ENCODE measurements at regions of chr9 and their contacts with region 1.

Region 1: GRCh38 chr9:34328987-34329832 is at the starts of genes KIF24 and NUDT2:
- DNase-seq: peak; percentile 78 to 99 (median 95)
- ATAC-seq: peak; percentile 92 to 95 (median 94)
- H3K4me3 ChIP-seq: peak within 1 kb of the TSS; percentile 84 to 92
- H3K4me3 Mint-ChIP-seq: peak within 1 kb of the TSS; percentile 93 to 98 (median 93)
- H3K27ac ChIP-seq: peak within 1 kb of the TSS; percentile 80
- H3K27ac Mint-ChIP-seq: peak within 1 kb of the TSS; percentile 92 to 93
- H3K4me1 ChIP-seq: peaks cover 9 to 15% of the 10 kb centered on the region in 2 experiments
- H3K4me1 Mint-ChIP-seq: peaks cover 27 to 40% (median 39%) of the 10 kb centered on the region in 3 donors
- H3K27me3 ChIP-seq: no peaks in the 10 kb centered on the region
- H3K27me3 Mint-ChIP-seq: no peaks in the 10 kb centered on the region
- total RNA-seq, gene KIF24: 0.15 to 0.41 (median 0.23) TPM
- total RNA-seq, gene NUDT2: 9.9 to 22.7 (median 17.4) TPM

Region 2: DNA sequence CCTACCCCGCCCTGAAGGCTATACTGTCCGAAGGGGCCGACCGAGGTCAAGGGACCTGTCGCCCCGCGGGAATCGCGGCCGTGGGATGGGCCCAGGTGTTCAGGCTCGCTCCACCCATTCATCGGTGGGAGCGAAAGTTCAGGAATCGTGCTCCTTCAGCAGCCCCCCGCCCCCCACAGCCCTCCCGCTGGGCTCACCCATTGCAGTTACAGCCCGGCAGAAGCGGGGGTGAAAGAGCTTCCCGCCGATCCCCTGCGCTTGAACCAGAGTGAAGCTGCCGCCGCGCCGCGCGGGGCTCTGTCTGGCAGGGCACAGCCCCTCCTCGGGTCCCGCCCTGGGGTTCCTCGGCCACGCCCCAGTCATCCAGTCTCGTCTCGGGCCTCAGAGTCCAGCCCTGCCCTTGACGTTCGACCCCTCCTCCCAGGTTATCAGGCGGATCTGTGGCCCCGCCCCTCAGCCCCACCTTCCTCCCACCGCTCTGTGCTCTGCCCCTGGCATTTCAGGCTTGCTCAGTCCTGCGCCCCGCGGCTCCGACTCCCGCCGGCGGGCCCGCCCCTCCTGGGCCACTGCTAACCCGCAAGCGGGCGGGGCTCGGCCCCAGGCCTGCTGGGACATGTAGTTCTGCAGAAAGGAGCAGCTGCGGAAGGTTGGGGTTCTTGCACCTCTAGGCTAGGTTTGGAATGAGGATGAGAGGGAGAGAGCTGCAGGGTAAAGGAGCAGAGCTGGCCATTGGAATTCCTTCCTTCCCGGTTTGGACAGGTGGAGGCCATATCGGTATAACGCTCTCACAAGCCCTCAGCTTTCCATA is 47.6 kb after region 1 on chr9 and contains the start of gene MYORG:
- CTCF ChIA-PET with region 1: interaction called, 21 to 27 read pairs
- POLR2A ChIA-PET with region 1: no interaction called
- DNase-seq: peak; percentile 84 to 97 (median 92)
- ATAC-seq: peak; percentile 80 to 82 (median 80)
- H3K4me3 ChIP-seq: peak within 1 kb of the TSS; percentile 34 to 63
- H3K4me3 Mint-ChIP-seq: peak within 1 kb of the TSS; percentile 89 to 94 (median 90)
- H3K27ac ChIP-seq: peak within 1 kb of the TSS; percentile 36
- H3K27ac Mint-ChIP-seq: peak within 1 kb of the TSS; percentile 87 to 89
- H3K4me1 ChIP-seq: peaks cover 10 to 47% of the 10 kb centered on the region in 2 experiments
- H3K4me1 Mint-ChIP-seq: peaks cover 41 to 52% (median 48%) of the 10 kb centered on the region in 3 donors
- H3K27me3 ChIP-seq: peaks cover 0 to 3% of the 10 kb centered on the region in 2 experiments
- H3K27me3 Mint-ChIP-seq: no peaks in the 10 kb centered on the region
- total RNA-seq, gene MYORG: 0.72 to 2.3 (median 1.6) TPM

Region 3: DNA sequence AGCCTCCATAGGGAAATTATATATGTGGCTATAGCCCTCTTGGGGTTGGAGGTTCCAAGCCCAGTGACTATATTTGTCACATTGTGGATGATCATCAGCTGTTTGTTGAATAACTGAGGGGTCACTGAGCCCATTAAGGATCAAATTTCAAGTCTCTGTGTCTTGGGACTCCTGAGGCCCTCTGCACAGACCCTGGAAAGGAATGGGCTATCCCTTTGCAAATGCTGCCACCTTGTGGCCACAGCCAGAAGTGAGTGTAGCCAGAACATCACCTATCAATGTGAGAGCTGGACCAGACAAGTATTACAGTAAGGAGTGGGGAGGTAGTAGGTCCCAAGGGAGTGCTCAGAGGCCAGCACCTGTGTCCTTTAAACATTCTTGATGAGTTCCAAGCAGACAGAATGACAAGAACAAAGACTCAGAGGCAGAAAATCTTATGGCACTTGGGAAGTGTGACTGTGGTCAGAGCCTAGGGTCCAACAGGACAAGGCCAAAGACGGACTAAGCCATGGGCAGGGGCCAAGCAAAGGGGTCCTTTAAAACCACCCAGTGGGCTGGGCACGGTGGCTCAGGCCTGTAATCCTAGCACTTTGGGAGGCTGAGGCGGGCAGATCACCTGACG is 274.5 kb after region 1 on chr9:
- CTCF ChIA-PET with region 1: no interaction called
- POLR2A ChIA-PET with region 1: interaction called in 1 of 2 experiments, 11 read pairs
- DNase-seq: peak; percentile 42 to 86 (median 71)
- ATAC-seq: peak; percentile 83 to 92 (median 88)
- H3K4me3 ChIP-seq: no peak overlapping the region
- H3K4me3 Mint-ChIP-seq: no peak overlapping the region
- H3K27ac ChIP-seq: no peak overlapping the region
- H3K27ac Mint-ChIP-seq: no peak overlapping the region
- H3K4me1 ChIP-seq: no peaks in the 10 kb centered on the region
- H3K4me1 Mint-ChIP-seq: no peaks in the 10 kb centered on the region
- H3K27me3 ChIP-seq: peaks cover 0 to 9% of the 10 kb centered on the region in 2 experiments
- H3K27me3 Mint-ChIP-seq: peaks cover 5% of the 10 kb centered on the region in 2 donors